Endothelial cell of umbilical vein (primary cell): ENCODE measurements at regions of chr3 and their contacts with region 1.

Region 1: DNA sequence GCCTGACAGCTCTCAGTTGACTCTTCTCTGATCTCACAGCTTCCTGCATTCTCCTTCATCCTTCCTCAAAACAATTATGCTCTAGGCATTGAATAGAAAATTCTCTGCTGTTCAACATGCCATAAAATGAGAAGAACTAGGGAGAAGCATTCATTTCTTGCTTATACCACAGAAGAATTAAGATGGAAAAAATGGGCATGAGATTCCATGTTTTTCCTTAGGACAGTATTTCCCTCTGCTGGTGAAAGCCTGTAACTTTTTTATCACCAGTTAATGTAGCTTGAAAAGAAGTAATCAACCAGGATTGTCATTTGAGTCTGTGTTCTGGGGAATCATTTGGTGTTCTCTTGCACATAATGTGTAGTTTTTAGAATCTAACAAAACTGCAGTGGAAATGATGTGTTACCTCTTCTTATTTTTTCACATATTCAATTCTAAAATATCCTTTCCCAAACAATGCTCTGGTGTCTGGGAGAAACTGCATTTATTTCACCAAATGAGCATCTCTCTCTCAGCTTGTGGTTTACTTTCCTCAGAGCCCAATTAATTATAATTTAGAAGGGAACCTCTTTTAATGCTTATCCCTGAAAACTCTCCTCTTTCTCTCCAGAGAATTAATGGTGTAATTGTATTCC is 92.8 kb upstream of the DCBLD2 start:
- DNase-seq: peak; percentile 76
- H3K4me3 ChIP-seq: no peak overlapping the region
- H3K27ac ChIP-seq: no peak overlapping the region
- H3K4me1 ChIP-seq: no peaks in the 10 kb centered on the region
- H3K27me3 ChIP-seq: no peaks in the 10 kb centered on the region
- CTCF ChIP-seq: peak; percentile 40 to 50
- POLR2A ChIP-seq: no peak

Region 2: DNA sequence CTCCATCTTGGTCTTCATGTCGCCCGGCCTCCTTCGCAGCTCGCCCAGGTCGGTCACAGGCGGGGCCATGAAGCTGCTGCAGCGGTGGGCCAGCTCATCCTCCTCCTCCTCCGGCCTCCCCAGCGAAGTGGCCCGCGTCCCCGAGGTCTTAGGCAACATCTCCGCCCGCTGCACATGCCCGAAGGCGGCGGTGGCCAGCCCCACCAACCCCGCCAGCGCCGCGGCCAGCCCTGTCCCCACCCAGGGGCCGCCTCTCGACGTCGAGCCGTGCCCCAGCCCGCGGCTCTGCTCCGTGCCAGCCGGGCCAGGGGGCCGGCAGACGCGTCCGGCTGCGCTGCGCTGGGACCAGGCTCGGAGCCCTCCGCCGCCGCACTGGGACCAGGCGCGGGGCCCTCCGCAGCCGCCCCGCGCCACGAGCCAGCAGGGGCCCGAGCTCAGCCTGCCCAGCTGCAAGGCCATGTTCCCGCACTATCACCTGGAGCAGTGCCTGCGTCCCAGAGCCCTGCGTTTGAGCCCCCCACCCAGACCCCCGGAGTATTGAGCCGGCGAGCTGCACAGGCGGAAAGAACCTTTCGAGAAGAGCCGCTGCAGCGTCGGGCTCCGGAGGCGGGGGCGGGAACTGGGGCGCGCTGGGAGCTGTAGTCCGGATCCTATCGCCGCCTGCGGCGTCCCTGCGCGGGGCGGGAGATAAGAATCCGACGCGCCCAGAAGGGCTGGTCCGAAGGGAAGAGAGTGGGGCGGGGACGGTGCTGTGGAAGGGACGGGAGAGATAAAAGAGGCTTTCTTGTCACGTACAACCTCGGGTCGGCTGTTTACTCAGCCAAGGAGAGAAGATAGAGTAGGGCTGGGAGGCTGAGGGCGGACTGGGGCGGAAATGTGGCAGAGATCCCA is 401.0 kb before region 1 on chr3 and contains the start of gene CPOX:
- CTCF ChIA-PET with region 1: interaction called, 18 read pairs
- POLR2A ChIA-PET with region 1: no interaction called
- dilution Hi-C with region 1: no loop called
- intact Hi-C with region 1: no loop called
- DNase-seq: peak; percentile 89
- H3K4me3 ChIP-seq: peak within 1 kb of the TSS; percentile 52 to 94 (median 76)
- H3K27ac ChIP-seq: peak within 1 kb of the TSS; percentile 49
- H3K4me1 ChIP-seq: peaks cover 10% of the 10 kb centered on the region
- H3K27me3 ChIP-seq: no peaks in the 10 kb centered on the region
- CTCF ChIP-seq: no peak
- POLR2A ChIP-seq: peak; percentile 44
- total RNA-seq, gene CPOX: 19.9 and 24.5 TPM in 2 replicates

Region 3: GRCh38 chr3:98817547-98818041 is 176.7 kb before region 1 on chr3:
- CTCF ChIA-PET with region 1: interaction called, 361 read pairs
- POLR2A ChIA-PET with region 1: interaction called, 7 read pairs
- dilution Hi-C with region 1: no loop called
- intact Hi-C with region 1: loop called (anchors 1 kb)
- DNase-seq: peak; percentile 66
- H3K4me3 ChIP-seq: no peak overlapping the region
- H3K27ac ChIP-seq: peak overlapping the region; percentile 34
- H3K4me1 ChIP-seq: peaks cover 8% of the 10 kb centered on the region
- H3K27me3 ChIP-seq: no peaks in the 10 kb centered on the region
- CTCF ChIP-seq: peak; percentile 27 to 34
- POLR2A ChIP-seq: no peak

Region 4: DNA sequence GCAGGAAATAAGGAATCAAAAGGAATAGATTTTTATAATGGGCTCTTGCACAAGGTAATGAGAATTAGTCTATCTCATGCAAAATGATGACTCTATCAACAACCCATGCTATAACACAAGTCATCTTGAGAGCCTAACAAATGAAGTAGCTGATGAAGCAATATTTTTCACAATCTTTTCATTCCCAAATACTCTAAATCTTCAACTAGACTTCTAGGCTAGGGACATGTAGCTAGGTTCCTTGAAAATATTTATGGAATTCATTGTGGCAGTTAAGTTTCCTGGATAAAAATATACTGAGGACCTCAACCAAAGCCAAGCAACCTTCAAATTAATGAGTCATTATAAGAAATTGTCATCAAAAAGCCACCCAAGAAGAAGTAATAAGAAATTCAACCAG is 148.1 kb before region 1 on chr3:
- CTCF ChIA-PET with region 1: interaction called, 12 read pairs
- POLR2A ChIA-PET with region 1: no interaction called
- dilution Hi-C with region 1: no loop called
- intact Hi-C with region 1: no loop called
- DNase-seq: no peak
- H3K4me3 ChIP-seq: no peak overlapping the region
- H3K27ac ChIP-seq: no peak overlapping the region
- H3K4me1 ChIP-seq: no peaks in the 10 kb centered on the region
- H3K27me3 ChIP-seq: no peaks in the 10 kb centered on the region
- CTCF ChIP-seq: no peak
- POLR2A ChIP-seq: no peak

Region 5: GRCh38 chr3:98893740-98894139 is 100.5 kb before region 1 on chr3:
- CTCF ChIA-PET with region 1: interaction called, 16 read pairs
- POLR2A ChIA-PET with region 1: no interaction called
- dilution Hi-C with region 1: no loop called
- intact Hi-C with region 1: no loop called
- DNase-seq: no peak
- H3K4me3 ChIP-seq: no peak overlapping the region
- H3K27ac ChIP-seq: no peak overlapping the region
- H3K4me1 ChIP-seq: peaks cover 51% of the 10 kb centered on the region
- H3K27me3 ChIP-seq: no peaks in the 10 kb centered on the region
- CTCF ChIP-seq: no peak
- POLR2A ChIP-seq: no peak

Region 6: DNA sequence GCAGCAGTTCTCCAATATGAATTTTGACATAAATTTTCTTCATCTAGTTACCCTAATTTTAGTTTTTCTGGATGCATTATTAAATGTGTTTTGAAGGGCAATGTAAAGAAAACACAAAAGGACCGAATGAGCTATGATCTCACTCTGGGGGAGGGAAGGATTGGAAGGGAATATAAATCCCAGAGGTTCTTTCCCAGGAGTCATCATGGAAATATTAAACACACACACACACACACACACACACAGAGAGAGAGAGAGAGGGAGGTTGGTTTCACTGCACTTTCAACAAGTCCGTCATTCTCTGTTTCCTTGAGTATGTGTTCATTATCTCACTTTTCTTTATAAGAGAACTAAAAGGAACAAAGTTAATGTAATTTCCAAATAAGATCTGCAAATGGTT is 22.1 kb before region 1 on chr3:
- CTCF ChIA-PET with region 1: interaction called, 10 read pairs
- POLR2A ChIA-PET with region 1: no interaction called
- dilution Hi-C with region 1: no loop called
- intact Hi-C with region 1: no loop called
- DNase-seq: peak; percentile 95
- H3K4me3 ChIP-seq: no peak overlapping the region
- H3K27ac ChIP-seq: peak overlapping the region; percentile 100
- H3K4me1 ChIP-seq: peaks cover 63% of the 10 kb centered on the region
- H3K27me3 ChIP-seq: no peaks in the 10 kb centered on the region
- CTCF ChIP-seq: no peak
- POLR2A ChIP-seq: no peak

Region 7: GRCh38 chr3:99145031-99145430 is 150.8 kb after region 1 on chr3:
- CTCF ChIA-PET with region 1: no interaction called
- POLR2A ChIA-PET with region 1: no interaction called
- dilution Hi-C with region 1: no loop called
- intact Hi-C with region 1: no loop called
- DNase-seq: peak; percentile 55
- H3K4me3 ChIP-seq: no peak overlapping the region
- H3K27ac ChIP-seq: no peak overlapping the region
- H3K4me1 ChIP-seq: no peaks in the 10 kb centered on the region
- H3K27me3 ChIP-seq: no peaks in the 10 kb centered on the region
- CTCF ChIP-seq: no peak
- POLR2A ChIP-seq: no peak

Region 8: DNA sequence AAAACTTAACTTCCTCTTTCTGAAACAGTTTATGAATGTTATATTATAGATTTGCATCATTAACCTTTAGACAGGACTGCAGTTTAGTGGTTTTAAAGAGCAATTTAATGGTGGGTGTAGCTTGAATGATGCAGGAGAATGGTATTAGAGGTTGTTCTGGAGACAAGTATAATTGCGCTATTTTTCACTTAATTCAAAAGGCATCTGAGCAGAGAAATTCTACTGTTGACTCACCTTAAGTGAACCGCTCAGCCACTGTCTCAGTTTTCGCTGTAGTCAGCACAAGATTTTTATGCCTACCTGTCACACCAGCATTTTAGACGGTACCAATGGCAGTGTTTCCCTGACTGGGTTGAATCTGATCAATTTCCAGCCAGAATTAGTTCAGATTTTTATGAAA is 256.0 kb after region 1 on chr3:
- CTCF ChIA-PET with region 1: no interaction called
- POLR2A ChIA-PET with region 1: no interaction called
- dilution Hi-C with region 1: no loop called
- intact Hi-C with region 1: no loop called
- DNase-seq: no peak
- H3K4me3 ChIP-seq: no peak overlapping the region
- H3K27ac ChIP-seq: no peak overlapping the region
- H3K4me1 ChIP-seq: peaks cover 23% of the 10 kb centered on the region
- H3K27me3 ChIP-seq: no peaks in the 10 kb centered on the region
- CTCF ChIP-seq: no peak
- POLR2A ChIP-seq: no peak